ENCODE measurements at regions of chr7 and their contacts with region 1.

Region 1: DNA sequence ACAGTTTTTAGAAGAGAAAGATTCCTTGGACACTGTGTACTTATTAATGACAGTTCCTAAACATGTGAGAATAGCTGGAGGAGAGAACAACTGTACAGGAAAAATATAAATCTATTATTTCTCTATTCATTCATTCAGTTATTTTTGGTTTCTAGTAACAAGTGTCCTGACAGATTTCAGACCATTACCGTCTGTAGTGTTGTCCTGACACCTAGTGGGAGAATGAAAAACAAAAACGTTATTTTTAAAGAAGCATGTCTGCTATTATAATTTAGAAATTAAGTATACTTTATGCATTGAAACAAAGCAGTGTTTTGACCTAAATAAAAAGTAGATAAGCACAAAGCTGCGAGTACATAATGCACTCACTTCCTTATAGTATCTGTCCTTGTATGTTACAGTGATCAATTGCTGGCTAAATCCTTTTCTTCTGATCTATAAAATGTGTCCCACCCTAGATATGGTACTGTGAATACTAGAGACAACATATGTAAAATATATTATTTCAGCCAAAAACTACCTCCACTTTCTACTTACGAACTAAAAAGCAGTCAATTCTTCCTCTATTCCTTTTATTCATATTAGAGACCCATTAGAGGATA is 575.6 kb downstream of the ARL4A start:
- DNase-seq: peak in 6 of 9 donors; percentile 4 to 42 (median 22)
- ATAC-seq: peak; percentile 52
- H3K4me3 ChIP-seq: no peak overlapping the region
- H3K4me3 Mint-ChIP-seq: no peak overlapping the region
- H3K27ac ChIP-seq: no peak overlapping the region
- H3K27ac Mint-ChIP-seq: no peak overlapping the region
- H3K4me1 ChIP-seq: no peaks in the 10 kb centered on the region
- H3K4me1 Mint-ChIP-seq: no peaks in the 10 kb centered on the region
- H3K27me3 ChIP-seq: no peaks in the 10 kb centered on the region
- H3K27me3 Mint-ChIP-seq: peaks cover 0 to 11% (median 5%) of the 10 kb centered on the region in 5 donors

Region 2: DNA sequence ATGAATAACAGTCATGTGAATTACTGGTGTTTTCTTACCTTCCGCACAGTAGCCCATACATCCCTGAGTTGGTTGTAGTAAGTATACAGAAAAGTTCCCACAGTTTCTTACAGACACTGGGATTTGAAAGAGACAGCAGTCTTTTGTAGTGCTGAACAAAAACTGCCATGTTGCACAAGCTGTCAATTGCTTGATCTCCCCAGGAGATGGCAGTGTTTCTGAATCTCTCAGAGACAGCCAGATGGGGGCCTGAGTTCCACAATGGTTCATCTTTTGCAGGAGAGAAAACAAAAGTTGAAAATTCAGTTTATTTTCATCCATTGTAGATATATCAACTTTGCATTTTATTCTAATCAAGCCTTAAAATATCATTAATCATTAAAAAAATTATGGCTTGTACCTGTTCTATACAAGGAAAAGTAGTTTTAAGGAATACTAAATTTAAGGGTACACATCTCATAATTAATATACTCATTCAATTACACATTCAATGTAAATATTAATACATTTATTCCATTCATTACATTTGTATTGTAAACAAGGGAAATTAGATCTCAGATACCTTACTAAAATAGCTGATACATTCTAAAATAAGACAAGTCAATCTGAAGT is 873.8 kb before region 1 on chr7:
- CTCF ChIA-PET with region 1: no interaction called
- POLR2A ChIA-PET with region 1: no interaction called
- intact Hi-C with region 1: loop called in 1 of 2 experiments (anchors 1 kb)
- DNase-seq: peak in 7 of 9 donors; percentile 7 to 47 (median 26)
- ATAC-seq: peak; percentile 81
- H3K4me3 ChIP-seq: no peak overlapping the region
- H3K4me3 Mint-ChIP-seq: no peak overlapping the region
- H3K27ac ChIP-seq: no peak overlapping the region
- H3K27ac Mint-ChIP-seq: no peak overlapping the region
- H3K4me1 ChIP-seq: no peaks in the 10 kb centered on the region
- H3K4me1 Mint-ChIP-seq: no peaks in the 10 kb centered on the region
- H3K27me3 ChIP-seq: no peaks in the 10 kb centered on the region
- H3K27me3 Mint-ChIP-seq: no peaks in the 10 kb centered on the region

Region 3: GRCh38 chr7:12674849-12675248 is 588.2 kb before region 1 on chr7:
- CTCF ChIA-PET with region 1: interaction called, 4 read pairs
- POLR2A ChIA-PET with region 1: no interaction called
- intact Hi-C with region 1: loop called (anchors 1 kb)
- DNase-seq: peak in 7 of 9 donors; percentile 31 to 64 (median 50)
- ATAC-seq: peak; percentile 92
- H3K4me3 ChIP-seq: no peak overlapping the region
- H3K4me3 Mint-ChIP-seq: no peak overlapping the region
- H3K27ac ChIP-seq: no peak overlapping the region
- H3K27ac Mint-ChIP-seq: peak overlapping the region in 2 of 9 donors; percentile 0
- H3K4me1 ChIP-seq: peaks cover 0 to 4% of the 10 kb centered on the region in 2 donors
- H3K4me1 Mint-ChIP-seq: peaks cover 7 to 13% (median 9%) of the 10 kb centered on the region in 7 donors
- H3K27me3 ChIP-seq: no peaks in the 10 kb centered on the region
- H3K27me3 Mint-ChIP-seq: peaks cover 0 to 13% (median 0%) of the 10 kb centered on the region in 5 donors

Region 4: GRCh38 chr7:13217768-13218167 is 45.3 kb before region 1 on chr7:
- CTCF ChIA-PET with region 1: no interaction called
- POLR2A ChIA-PET with region 1: no interaction called
- intact Hi-C with region 1: no loop called
- DNase-seq: no peak
- ATAC-seq: no peak
- H3K4me3 ChIP-seq: no peak overlapping the region
- H3K4me3 Mint-ChIP-seq: no peak overlapping the region
- H3K27ac ChIP-seq: no peak overlapping the region
- H3K27ac Mint-ChIP-seq: no peak overlapping the region
- H3K4me1 ChIP-seq: no peaks in the 10 kb centered on the region
- H3K4me1 Mint-ChIP-seq: no peaks in the 10 kb centered on the region
- H3K27me3 ChIP-seq: no peaks in the 10 kb centered on the region
- H3K27me3 Mint-ChIP-seq: peaks cover 0 to 11% (median 0%) of the 10 kb centered on the region in 5 donors

Region 5: DNA sequence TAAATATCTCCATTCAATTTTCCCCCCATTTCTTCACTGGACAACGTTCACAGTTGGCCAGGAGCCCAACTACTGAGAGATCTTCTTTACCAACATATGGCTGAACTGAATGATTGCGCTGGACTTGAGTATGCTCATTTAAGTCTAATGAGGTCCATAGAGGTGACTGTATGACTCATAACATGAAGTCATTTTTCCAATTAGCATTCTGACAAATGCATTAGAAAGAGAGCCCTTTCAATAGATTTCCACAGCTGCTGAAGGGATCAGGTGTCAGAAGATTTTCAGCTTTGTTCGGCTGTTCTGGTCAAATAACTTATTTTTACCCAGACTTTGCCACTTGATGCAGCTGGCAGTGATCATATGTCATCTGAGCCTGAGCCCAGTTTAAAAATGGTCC is 288.5 kb after region 1 on chr7:
- CTCF ChIA-PET with region 1: no interaction called
- POLR2A ChIA-PET with region 1: no interaction called
- intact Hi-C with region 1: no loop called
- DNase-seq: no peak
- ATAC-seq: no peak
- H3K4me3 ChIP-seq: no peak overlapping the region
- H3K4me3 Mint-ChIP-seq: no peak overlapping the region
- H3K27ac ChIP-seq: no peak overlapping the region
- H3K27ac Mint-ChIP-seq: no peak overlapping the region
- H3K4me1 ChIP-seq: no peaks in the 10 kb centered on the region
- H3K4me1 Mint-ChIP-seq: no peaks in the 10 kb centered on the region
- H3K27me3 ChIP-seq: no peaks in the 10 kb centered on the region
- H3K27me3 Mint-ChIP-seq: no peaks in the 10 kb centered on the region